Lower leg skin (tissue), 4 donors: ENCODE measurements at regions of chr19 and their contacts with region 1.

Region 1: GRCh38 chr19:29610563-29611271 is 4.6 kb downstream of the POP4 start:
- DNase-seq: peak; percentile 79 to 95
- H3K4me3 ChIP-seq: no peak overlapping the region
- CTCF ChIP-seq: peak in 1 of 3 donors; percentile 74
- POLR2A ChIP-seq: no peak

Region 2: GRCh38 chr19:29453596-29453995 is 157.1 kb before region 1 on chr19:
- intact Hi-C with region 1: no loop called
- DNase-seq: peak in 1 of 2 donors; percentile 1
- H3K4me3 ChIP-seq: no peak overlapping the region
- CTCF ChIP-seq: no peak
- POLR2A ChIP-seq: no peak

Region 3: GRCh38 chr19:29714953-29715700 is 104.4 kb after region 1 on chr19 and contains the start of gene C19orf12:
- intact Hi-C with region 1: loop called (anchors 5 kb)
- DNase-seq: peak in 1 of 2 donors; percentile 90
- H3K4me3 ChIP-seq: peak within 1 kb of the TSS; percentile 63
- CTCF ChIP-seq: no peak
- POLR2A ChIP-seq: peak in 1 of 2 donors; percentile 30
- total RNA-seq, gene C19orf12: 20.6 to 32.3 (median 26.0) TPM